OCI-LY7 (cell line): ENCODE measurements at regions of chr6 and their contacts with region 1.

Region 1: GRCh38 chr6:24855395-24856245 is 56.9 kb upstream of the ARMH2 start:
- DNase-seq: peak; percentile 86
- H3K4me3 ChIP-seq: no peak overlapping the region
- H3K27ac ChIP-seq: peak overlapping the region; percentile 1
- H3K4me1 ChIP-seq: peaks cover 54% of the 10 kb centered on the region
- CTCF ChIP-seq: peak; percentile 96

Region 2: DNA sequence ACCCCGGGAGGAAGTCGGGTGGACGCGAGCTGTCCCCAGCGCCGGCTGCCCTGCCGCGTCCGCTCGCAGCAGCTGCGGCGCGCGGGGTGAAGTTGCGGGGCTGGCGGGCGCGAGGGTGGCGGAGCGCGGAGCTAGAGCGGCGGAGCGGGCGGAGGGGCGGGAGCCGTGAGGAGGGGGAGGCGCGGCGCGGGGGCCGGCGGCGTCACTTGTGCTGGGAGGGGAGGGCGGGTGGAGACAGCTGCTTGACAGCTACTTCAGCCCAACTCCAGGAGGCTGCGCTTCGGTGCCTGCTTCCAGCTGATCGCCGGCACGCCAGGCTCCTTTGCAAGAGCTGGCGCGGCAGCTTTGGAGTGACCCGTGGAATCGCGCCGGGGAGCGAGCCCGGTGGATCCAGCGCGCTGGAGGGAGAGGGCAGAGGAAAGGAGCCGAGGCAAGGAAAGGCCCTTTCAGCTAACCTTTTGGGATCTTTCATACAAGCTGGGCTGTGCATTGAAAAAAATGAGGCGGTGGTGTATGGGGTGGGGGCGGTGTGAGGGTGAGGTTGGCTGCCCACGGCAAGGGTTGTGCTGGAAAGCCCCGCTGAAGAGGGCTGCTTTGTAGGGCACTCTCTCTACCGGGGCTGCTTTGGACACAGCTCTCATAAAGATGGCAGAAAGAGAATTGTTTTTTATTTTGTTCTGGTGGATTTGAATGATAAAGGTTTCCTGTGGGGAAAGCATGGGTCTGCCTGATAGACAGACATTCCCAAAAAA is 55.5 kb after region 1 on chr6:
- CTCF ChIA-PET with region 1: interaction called, 3 read pairs
- POLR2A ChIA-PET with region 1: interaction called, 5 read pairs
- intact Hi-C with region 1: loop called (anchors 1 kb)
- DNase-seq: peak; percentile 62
- H3K4me3 ChIP-seq: peak overlapping the region; percentile 75
- H3K27ac ChIP-seq: peak overlapping the region; percentile 95
- H3K4me1 ChIP-seq: peaks cover 75% of the 10 kb centered on the region
- CTCF ChIP-seq: no peak

Region 3: GRCh38 chr6:24933868-24934401 is 78.3 kb after region 1 on chr6:
- CTCF ChIA-PET with region 1: interaction called, 6 read pairs
- POLR2A ChIA-PET with region 1: interaction called, 10 read pairs
- intact Hi-C with region 1: loop called (anchors 1 kb)
- DNase-seq: peak; percentile 80
- H3K4me3 ChIP-seq: peak overlapping the region; percentile 68
- H3K27ac ChIP-seq: peak overlapping the region; percentile 88
- H3K4me1 ChIP-seq: peaks cover 93% of the 10 kb centered on the region
- CTCF ChIP-seq: peak; percentile 100

Region 4: DNA sequence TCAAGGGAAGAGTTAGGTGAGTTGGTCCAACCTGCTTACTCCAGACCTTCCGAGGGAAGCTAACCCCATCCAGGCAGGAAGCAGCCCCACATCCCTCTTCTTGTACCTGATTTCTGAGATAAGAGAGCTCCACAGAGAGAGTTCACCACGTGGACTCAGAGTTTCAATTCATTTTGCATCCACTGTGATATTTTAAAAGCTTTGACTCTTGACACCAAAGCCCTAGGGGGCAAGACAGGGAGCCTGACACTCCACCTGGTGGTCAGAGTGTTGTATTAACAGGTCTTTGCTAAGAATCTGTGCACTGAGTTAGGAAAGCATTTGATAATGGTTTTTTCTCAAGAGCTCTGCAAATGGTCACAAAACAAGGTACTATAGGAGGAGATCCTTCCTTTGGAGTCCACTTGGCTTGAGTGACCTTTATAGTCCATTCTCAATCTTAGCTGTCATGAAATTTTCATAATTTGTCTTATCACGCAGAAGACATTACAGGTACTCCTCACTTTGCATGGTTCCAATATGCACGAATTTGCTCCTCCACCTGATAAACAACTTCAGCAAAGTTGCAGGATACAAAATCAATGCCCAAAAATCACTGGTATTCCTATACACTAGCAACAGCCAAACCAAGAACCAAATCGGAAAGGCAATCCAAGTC is 136.3 kb after region 1 on chr6:
- CTCF ChIA-PET with region 1: interaction called, 32 read pairs
- POLR2A ChIA-PET with region 1: interaction called, 3 read pairs
- intact Hi-C with region 1: loop called (anchors 1 kb)
- DNase-seq: peak; percentile 91
- H3K4me3 ChIP-seq: no peak overlapping the region
- H3K27ac ChIP-seq: no peak overlapping the region
- H3K4me1 ChIP-seq: peaks cover 19% of the 10 kb centered on the region
- CTCF ChIP-seq: peak; percentile 96

Region 5: GRCh38 chr6:25017932-25018567 is 162.4 kb after region 1 on chr6:
- CTCF ChIA-PET with region 1: interaction called, 12 read pairs
- POLR2A ChIA-PET with region 1: interaction called, 5 read pairs
- intact Hi-C with region 1: loop called (anchors 1 kb)
- DNase-seq: peak; percentile 87
- H3K4me3 ChIP-seq: peak overlapping the region; percentile 10
- H3K27ac ChIP-seq: peak overlapping the region; percentile 46
- H3K4me1 ChIP-seq: peaks cover 51% of the 10 kb centered on the region
- CTCF ChIP-seq: peak; percentile 98

Region 6: GRCh38 chr6:25070547-25071366 is 215.1 kb after region 1 on chr6:
- CTCF ChIA-PET with region 1: interaction called, 3 read pairs
- POLR2A ChIA-PET with region 1: interaction called, 5 read pairs
- intact Hi-C with region 1: loop called (anchors 1 kb)
- DNase-seq: peak; percentile 90
- H3K4me3 ChIP-seq: peak overlapping the region; percentile 26
- H3K27ac ChIP-seq: peak overlapping the region; percentile 18
- H3K4me1 ChIP-seq: peaks cover 2% of the 10 kb centered on the region
- CTCF ChIP-seq: peak; percentile 99